KBM-7 (cell line): ENCODE measurements at regions of chr1 and their contacts with region 1.

Region 1: GRCh38 chr1:14571819-14572767 is 26.4 kb upstream of the KAZN start:
- DNase-seq: no peak

Region 2: DNA sequence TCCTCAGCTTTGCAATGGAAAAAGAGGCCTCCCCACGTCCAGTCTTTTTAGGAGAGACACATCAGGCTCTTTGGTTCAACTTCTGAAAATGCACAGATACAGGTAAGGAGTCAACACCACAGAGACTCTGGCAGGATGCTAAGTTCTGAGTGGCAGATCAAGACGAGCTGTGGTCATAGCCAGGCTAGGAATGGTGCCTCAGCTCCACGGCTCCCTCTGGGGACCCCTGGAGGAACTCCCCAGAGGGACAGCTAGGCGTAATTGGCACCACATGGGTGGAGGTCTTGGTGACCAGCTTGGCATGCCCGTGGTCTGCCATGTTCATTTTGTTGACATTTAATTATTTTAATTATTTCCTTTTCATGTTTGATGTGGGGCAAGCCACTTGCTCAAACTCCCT is 232.5 kb after region 1 on chr1:
- in situ Hi-C with region 1: loop called (anchors 25 kb)
- DNase-seq: peak; percentile 34

Region 3: GRCh38 chr1:15046487-15047165 is 474.5 kb after region 1 on chr1:
- in situ Hi-C with region 1: loop called (anchors 25 kb)
- DNase-seq: peak; percentile 70